ENCODE measurements at regions of chr12 and their contacts with region 1.

Region 1: DNA sequence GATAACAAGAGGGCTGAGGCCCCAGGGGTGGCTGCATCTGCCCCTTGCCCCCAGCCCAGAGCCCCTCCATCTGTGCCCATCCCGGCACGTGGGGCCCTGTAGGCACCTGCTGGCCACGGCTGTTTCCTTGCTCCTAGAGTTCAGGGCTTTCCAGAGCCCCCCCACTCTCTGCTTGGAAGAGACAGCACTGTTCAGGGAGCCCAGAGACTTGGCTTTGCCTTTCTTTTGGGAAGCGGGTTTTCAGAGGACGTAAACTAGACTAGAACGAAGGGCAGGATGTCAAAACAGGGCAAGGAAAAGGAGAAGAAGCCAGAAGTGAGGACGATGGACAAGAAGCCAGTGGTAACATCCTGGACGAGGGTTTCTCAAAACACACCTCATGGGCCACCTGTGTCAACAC is 163.3 kb upstream of the LHX5 start:
- DNase-seq: no peak
- ATAC-seq: no peak
- H3K4me3 ChIP-seq: no peak overlapping the region
- H3K27ac ChIP-seq: no peak overlapping the region
- H3K4me1 ChIP-seq: no peaks in the 10 kb centered on the region
- H3K27me3 ChIP-seq: peaks cover 3 to 32% of the 10 kb centered on the region in 2 experiments; a peak in 3 of 5 replicates
- CTCF ChIP-seq: no peak
- EP300 ChIP-seq: no peak
- POLR2A ChIP-seq: no peak
- RAD21 ChIP-seq: no peak

Region 2: DNA sequence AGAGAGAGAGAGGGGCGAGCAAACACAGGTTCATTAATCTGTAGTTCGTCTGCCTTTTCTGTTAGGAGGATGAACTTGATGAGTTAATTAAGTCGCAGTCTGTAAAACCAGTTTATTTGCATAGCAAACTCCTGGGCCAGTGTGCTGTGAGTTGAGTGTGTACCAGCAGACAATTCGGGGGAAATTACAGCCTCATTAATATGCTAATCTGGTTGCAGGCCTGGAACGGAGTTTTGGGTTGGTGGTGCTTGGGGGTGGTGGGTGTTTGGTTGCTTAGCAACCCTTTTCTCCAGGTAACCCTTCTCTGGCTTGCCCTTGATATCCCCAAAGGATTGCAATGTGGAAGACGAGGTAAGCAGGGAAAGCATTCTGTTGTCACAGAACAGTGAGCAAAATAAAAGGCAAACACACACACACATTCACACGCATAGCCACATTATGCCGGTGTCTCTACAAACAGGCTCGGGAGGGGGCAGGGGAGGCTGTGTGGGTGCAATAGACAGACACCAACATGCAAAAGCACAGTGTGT is 134.1 kb before region 1 on chr12:
- CTCF ChIA-PET with region 1: no interaction called
- POLR2A ChIA-PET with region 1: no interaction called
- in situ Hi-C with region 1: no loop called
- intact Hi-C with region 1: no loop called
- DNase-seq: no peak
- ATAC-seq: no peak
- H3K4me3 ChIP-seq: no peak overlapping the region
- H3K27ac ChIP-seq: no peak overlapping the region
- H3K4me1 ChIP-seq: no peaks in the 10 kb centered on the region
- H3K27me3 ChIP-seq: peaks cover 0 to 14% of the 10 kb centered on the region in 2 experiments; a peak in 2 of 5 replicates
- CTCF ChIP-seq: no peak
- EP300 ChIP-seq: no peak
- POLR2A ChIP-seq: no peak
- RAD21 ChIP-seq: no peak

Region 3: GRCh38 chr12:113512568-113512967 is 122.4 kb before region 1 on chr12:
- CTCF ChIA-PET with region 1: no interaction called
- POLR2A ChIA-PET with region 1: no interaction called
- in situ Hi-C with region 1: no loop called
- intact Hi-C with region 1: loop called (anchors 5 kb)
- DNase-seq: no peak
- ATAC-seq: no peak; the same call in 2 of the 3 replicates
- H3K4me3 ChIP-seq: no peak overlapping the region
- H3K27ac ChIP-seq: no peak overlapping the region
- H3K4me1 ChIP-seq: 0 out of 2 replicates have a peak, but pooled peaks cover 6% of the 10 kb centered on the region
- H3K27me3 ChIP-seq: peaks cover 0 to 27% of the 10 kb centered on the region in 2 experiments; a peak in 4 of 5 replicates
- CTCF ChIP-seq: no peak
- EP300 ChIP-seq: no peak
- POLR2A ChIP-seq: no peak
- RAD21 ChIP-seq: no peak